ENCODE measurements at regions of chr14 and their contacts with region 1.

Region 1: DNA sequence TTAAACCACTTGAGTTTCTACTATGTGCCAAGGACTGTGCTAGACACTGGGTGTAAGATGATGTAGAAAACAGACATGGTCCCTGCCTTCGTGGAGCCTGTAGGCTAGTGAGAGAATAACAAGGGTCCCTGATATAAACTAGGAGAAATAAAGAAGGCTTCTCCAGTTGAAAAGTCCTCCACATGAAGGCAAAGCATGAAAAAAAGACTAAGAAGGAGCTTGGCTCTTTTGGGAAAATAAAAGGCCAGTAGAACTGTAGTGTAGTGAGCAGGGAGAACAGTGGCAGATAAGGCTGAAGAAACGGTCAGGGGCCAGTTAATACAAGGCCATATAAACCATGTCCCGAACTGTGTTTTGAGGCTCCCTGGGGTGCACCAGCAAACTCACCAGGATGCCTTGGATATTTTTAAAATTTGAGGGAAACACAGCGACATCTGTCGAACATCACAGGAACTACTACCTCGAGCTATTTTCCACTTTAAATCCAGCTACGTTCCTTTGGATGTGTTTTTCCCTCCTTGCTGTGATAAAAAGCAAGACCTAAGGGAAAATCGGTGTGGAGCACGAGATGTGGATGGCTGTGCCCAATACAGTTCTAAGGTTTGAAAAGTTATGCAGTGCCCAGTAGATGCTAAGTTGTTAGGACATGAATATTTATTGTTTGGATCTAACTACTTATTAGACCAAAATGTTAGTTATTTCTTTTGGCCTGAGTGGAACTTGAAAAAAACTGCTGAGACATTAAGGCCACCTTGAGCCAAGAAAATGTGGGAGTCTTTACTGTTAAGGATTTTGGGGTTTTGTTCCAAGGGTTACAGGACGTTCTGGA is 8.5 kb upstream of the CFL2 start:
- DNase-seq: peak in 3 of 5 donors; percentile 11 to 37 (median 36)
- ATAC-seq: peak in 3 of 4 donors; percentile 37 to 53 (median 49)
- H3K4me3 ChIP-seq: no peak overlapping the region
- H3K27ac ChIP-seq: no peak overlapping the region
- H3K4me1 ChIP-seq: peaks cover 0 to 8% (median 0%) of the 10 kb centered on the region in 12 donors
- H3K27me3 ChIP-seq: no peaks in the 10 kb centered on the region
- CTCF ChIP-seq: peak; percentile 78 to 90 (median 82)
- POLR2A ChIP-seq: no peak

Region 2: GRCh38 chr14:34302654-34303053 is 420.3 kb before region 1 on chr14:
- intact Hi-C with region 1: no loop called
- DNase-seq: no peak
- ATAC-seq: peak in 3 of 4 donors; percentile 22 to 37 (median 24)
- H3K4me3 ChIP-seq: no peak overlapping the region
- H3K27ac ChIP-seq: no peak overlapping the region
- H3K4me1 ChIP-seq: no peaks in the 10 kb centered on the region
- H3K27me3 ChIP-seq: no peaks in the 10 kb centered on the region
- CTCF ChIP-seq: no peak
- POLR2A ChIP-seq: no peak

Region 3: DNA sequence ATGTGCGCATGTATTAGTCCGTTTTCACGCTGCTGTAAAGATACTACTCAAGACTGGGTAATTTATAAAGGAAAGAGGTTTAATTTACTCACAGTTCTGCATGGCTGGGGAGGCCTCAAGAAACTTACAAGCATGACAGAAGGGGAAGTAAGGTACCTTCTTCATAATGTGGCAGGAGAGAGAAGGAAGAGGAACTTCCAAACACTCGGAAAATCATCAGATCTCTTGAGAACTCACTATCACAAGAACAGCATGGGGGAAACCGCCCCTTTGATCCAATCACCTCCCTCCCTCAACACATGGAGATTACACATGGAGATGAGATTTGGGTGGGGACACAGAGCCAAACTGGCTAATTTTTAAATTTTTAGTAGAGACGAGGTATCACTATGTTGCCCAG is 51.2 kb before region 1 on chr14:
- intact Hi-C with region 1: loop called (anchors 1 to 2 kb)
- DNase-seq: no peak
- ATAC-seq: no peak
- H3K4me3 ChIP-seq: no peak overlapping the region
- H3K27ac ChIP-seq: peak overlapping the region in 1 of 12 donors; percentile 42
- H3K4me1 ChIP-seq: peaks cover 0 to 14% (median 0%) of the 10 kb centered on the region in 12 donors
- H3K27me3 ChIP-seq: no peaks in the 10 kb centered on the region
- CTCF ChIP-seq: no peak
- POLR2A ChIP-seq: no peak